A673 (cell line): ENCODE measurements at regions of chr15 and their contacts with region 1.

Region 1: DNA sequence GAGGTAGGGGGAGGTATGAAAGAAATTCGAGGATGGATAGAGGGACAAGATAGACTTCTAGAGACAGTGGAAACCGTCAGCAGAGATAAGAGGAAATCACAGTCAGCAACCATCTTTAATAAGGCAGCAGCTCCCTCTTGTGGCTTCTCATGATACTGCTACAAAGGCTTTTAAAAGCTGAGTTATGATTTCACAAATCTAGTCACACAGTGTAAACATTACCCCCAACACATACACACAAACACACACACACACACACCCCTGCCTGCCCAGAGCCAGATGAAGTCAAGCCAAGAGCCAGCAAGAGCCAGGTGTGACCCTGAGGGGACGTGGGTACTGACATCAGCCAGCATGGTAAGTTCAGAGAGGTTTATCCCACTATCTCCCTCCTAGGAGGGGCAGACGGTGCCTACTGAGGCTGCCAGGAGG is 18.9 kb upstream of the TGM5 start:
- DNase-seq: peak; percentile 77
- H3K4me3 ChIP-seq: no peak overlapping the region
- H3K27ac ChIP-seq: no peak overlapping the region
- H3K4me1 ChIP-seq: no peaks in the 10 kb centered on the region
- H3K27me3 ChIP-seq: no peaks in the 10 kb centered on the region
- CTCF ChIP-seq: peak; percentile 86

Region 2: GRCh38 chr15:43185157-43186017 is 100.2 kb before region 1 on chr15 and contains the start of gene CCNDBP1:
- CTCF ChIA-PET with region 1: interaction called, 3 read pairs
- POLR2A ChIA-PET with region 1: no interaction called
- intact Hi-C with region 1: loop called (anchors 5 kb)
- DNase-seq: peak; percentile 82
- H3K4me3 ChIP-seq: peak within 1 kb of the TSS; percentile 65
- H3K27ac ChIP-seq: peak within 1 kb of the TSS; percentile 13
- H3K4me1 ChIP-seq: no peaks in the 10 kb centered on the region
- H3K27me3 ChIP-seq: no peaks in the 10 kb centered on the region
- CTCF ChIP-seq: peak; percentile 65
- total RNA-seq, gene CCNDBP1: 16.7 and 22.1 TPM in 2 replicates

Region 3: DNA sequence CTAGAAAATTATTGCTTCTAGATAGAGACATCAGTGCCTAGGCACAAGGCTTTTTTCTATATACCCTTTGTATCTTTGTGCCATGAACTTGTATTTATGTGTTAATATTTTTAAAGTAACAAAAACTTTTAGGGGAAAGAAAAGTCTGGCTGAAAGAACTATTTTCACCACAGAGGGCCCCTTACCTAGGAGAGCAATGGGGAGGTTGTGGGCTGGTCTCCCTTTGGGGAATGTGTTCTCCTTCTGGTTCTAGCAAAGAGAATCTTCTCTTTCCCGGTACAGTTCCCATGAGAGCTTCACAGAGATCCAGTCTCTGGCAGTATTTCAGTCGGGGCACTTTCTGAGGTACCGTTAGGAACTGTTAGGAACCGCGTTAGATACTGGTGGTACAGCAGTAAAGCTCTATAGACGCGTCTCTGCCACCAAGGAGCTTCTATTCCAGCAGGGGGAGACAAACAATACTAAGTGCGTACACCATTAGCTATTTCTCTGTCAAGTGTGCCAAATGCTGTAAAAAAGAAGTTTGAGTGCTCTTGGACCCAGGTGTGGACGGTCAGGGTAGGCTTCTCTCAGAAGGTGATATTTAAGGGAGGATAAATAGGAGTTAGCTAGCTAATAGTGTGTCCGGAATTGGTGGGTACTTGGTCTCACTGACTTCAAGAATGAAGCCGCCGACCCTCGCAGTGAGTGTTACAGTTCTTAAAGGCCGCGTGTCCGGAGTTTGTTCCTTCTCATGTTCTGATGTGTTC is 60.2 kb before region 1 on chr15:
- CTCF ChIA-PET with region 1: interaction called, 47 read pairs
- POLR2A ChIA-PET with region 1: no interaction called
- intact Hi-C with region 1: loop called (anchors 2 kb)
- DNase-seq: peak; percentile 78
- H3K4me3 ChIP-seq: no peak overlapping the region
- H3K27ac ChIP-seq: no peak overlapping the region
- H3K4me1 ChIP-seq: no peaks in the 10 kb centered on the region
- H3K27me3 ChIP-seq: no peaks in the 10 kb centered on the region
- CTCF ChIP-seq: peak; percentile 86